HEK293 (cell line): ENCODE measurements at regions of chr9 and their contacts with region 1.

Region 1: GRCh38 chr9:4792572-4793458 is at the start of gene RCL1:
- H3K4me3 ChIP-seq: peak within 1 kb of the TSS; percentile 96
- H3K27ac ChIP-seq: peak within 1 kb of the TSS; percentile 61; the same call in 1 of the 2 replicates
- H3K4me1 ChIP-seq: no peaks in the 10 kb centered on the region
- CTCF ChIP-seq: peak; percentile 52; the same call in 1 of the 2 replicates

Region 2: DNA sequence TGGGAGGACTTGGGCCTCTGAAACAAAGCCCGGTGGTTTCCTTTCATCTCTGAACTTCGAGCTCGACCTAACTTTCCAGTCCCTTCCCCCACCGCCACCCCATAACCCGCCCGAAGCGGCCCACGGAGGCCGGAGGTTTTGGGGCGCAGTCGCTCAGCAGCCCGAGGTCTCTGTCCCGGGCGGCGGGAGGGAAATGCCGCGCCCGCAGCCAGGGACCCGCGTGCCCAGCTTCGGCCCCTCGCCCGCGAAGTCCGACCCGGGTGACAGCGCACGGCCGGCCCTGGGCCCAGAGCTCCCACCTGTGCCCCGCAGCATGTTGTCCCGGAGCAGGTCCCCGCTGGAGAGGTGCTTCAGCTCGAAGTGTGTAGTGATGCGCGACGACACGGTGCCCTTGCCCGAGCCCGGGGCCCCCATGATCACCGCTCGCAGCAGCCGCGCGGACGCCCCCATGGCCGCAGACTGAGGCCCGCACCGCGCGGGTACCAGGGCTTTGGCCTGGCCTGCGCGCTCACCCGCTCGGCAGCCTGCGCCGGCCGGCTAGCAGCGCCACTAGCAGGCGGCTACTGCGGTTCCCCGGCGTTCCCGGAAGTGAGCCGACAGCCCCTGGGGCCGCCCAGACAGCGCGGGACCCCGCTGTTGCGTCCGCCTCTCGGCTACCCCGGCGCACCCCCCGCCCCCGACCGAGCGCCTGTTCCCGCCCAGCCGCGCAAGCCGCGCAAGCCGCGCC is 52.0 kb before region 1 on chr9 and contains the start of gene AK3:
- CTCF ChIA-PET with region 1: interaction called, 4 read pairs
- POLR2A ChIA-PET with region 1: interaction called, 10 read pairs
- H3K4me3 ChIP-seq: peak within 1 kb of the TSS; percentile 86
- H3K27ac ChIP-seq: peak within 1 kb of the TSS; percentile 89
- H3K4me1 ChIP-seq: no peaks in the 10 kb centered on the region
- CTCF ChIP-seq: peak; percentile 54; the same call in 1 of the 2 replicates

Region 3: GRCh38 chr9:4812858-4813257 is 20.0 kb after region 1 on chr9:
- CTCF ChIA-PET with region 1: interaction called, 15 read pairs
- POLR2A ChIA-PET with region 1: no interaction called
- H3K4me3 ChIP-seq: no peak overlapping the region
- H3K27ac ChIP-seq: no peak overlapping the region
- H3K4me1 ChIP-seq: no peaks in the 10 kb centered on the region
- CTCF ChIP-seq: no peak

Region 4: GRCh38 chr9:4984621-4985385 is 192.0 kb after region 1 on chr9 and contains the start of gene JAK2:
- CTCF ChIA-PET with region 1: interaction called, 6 read pairs
- POLR2A ChIA-PET with region 1: interaction called, 11 read pairs
- H3K4me3 ChIP-seq: peak within 1 kb of the TSS; percentile 53
- H3K27ac ChIP-seq: peak within 1 kb of the TSS; percentile 81
- H3K4me1 ChIP-seq: no peaks in the 10 kb centered on the region
- CTCF ChIP-seq: peak; percentile 89